HepG2 (cell line): ENCODE measurements at regions of chr9 and their contacts with region 1.

Region 1: DNA sequence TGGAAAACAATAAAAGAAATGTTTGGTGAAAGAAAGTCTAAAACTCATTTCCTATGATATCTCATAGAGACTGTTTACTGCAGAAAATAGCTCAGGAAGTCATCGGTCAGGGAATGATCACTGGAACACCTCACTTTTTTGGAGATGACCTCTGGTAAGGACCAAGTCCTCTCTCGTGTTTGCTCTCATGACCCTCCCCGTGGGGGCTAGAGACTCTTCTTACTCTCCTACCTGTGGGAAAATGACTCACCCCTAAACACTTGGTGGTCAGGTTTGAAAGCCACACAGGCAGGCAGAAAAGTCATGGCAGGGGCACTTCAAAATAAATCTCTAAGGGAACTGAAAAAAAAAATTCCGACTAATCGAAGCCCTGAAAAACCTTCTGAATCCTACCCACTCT is 48.2 kb downstream of the FAM240B start:
- DNase-seq: no peak
- ATAC-seq: no peak
- H3K4me3 ChIP-seq: no peak overlapping the region
- H3K27ac ChIP-seq: no peak overlapping the region
- H3K4me1 ChIP-seq: peaks cover 23% of the 10 kb centered on the region
- H3K27me3 ChIP-seq: peaks cover 2 to 45% of the 10 kb centered on the region in 2 experiments; a peak in 2 of 5 replicates
- CTCF ChIP-seq: no peak
- EP300 ChIP-seq: no peak
- POLR2A ChIP-seq: no peak
- RAD21 ChIP-seq: no peak

Region 2: GRCh38 chr9:38096238-38096805 is 575.4 kb before region 1 on chr9:
- CTCF ChIA-PET with region 1: no interaction called
- POLR2A ChIA-PET with region 1: no interaction called
- in situ Hi-C with region 1: no loop called
- intact Hi-C with region 1: no loop called
- DNase-seq: no peak
- ATAC-seq: no peak
- H3K4me3 ChIP-seq: no peak overlapping the region
- H3K27ac ChIP-seq: no peak overlapping the region
- H3K4me1 ChIP-seq: no peaks in the 10 kb centered on the region
- H3K27me3 ChIP-seq: peaks cover 1 to 11% of the 10 kb centered on the region in 2 experiments; a peak in 2 of 5 replicates
- CTCF ChIP-seq: no peak
- EP300 ChIP-seq: no peak
- POLR2A ChIP-seq: no peak
- RAD21 ChIP-seq: no peak

Region 3: GRCh38 chr9:38417003-38417945 is 254.5 kb before region 1 on chr9:
- CTCF ChIA-PET with region 1: no interaction called
- POLR2A ChIA-PET with region 1: no interaction called
- in situ Hi-C with region 1: no loop called
- intact Hi-C with region 1: loop called (anchors 5 kb)
- DNase-seq: peak; percentile 38
- ATAC-seq: peak; percentile 77
- H3K4me3 ChIP-seq: no peak overlapping the region
- H3K27ac ChIP-seq: no peak overlapping the region
- H3K4me1 ChIP-seq: peaks cover 11% of the 10 kb centered on the region; the same call in 1 of the 2 replicates
- H3K27me3 ChIP-seq: peaks cover 6 to 46% of the 10 kb centered on the region in 2 experiments
- CTCF ChIP-seq: peak; percentile 79
- EP300 ChIP-seq: no peak
- POLR2A ChIP-seq: no peak
- RAD21 ChIP-seq: no peak

Region 4: DNA sequence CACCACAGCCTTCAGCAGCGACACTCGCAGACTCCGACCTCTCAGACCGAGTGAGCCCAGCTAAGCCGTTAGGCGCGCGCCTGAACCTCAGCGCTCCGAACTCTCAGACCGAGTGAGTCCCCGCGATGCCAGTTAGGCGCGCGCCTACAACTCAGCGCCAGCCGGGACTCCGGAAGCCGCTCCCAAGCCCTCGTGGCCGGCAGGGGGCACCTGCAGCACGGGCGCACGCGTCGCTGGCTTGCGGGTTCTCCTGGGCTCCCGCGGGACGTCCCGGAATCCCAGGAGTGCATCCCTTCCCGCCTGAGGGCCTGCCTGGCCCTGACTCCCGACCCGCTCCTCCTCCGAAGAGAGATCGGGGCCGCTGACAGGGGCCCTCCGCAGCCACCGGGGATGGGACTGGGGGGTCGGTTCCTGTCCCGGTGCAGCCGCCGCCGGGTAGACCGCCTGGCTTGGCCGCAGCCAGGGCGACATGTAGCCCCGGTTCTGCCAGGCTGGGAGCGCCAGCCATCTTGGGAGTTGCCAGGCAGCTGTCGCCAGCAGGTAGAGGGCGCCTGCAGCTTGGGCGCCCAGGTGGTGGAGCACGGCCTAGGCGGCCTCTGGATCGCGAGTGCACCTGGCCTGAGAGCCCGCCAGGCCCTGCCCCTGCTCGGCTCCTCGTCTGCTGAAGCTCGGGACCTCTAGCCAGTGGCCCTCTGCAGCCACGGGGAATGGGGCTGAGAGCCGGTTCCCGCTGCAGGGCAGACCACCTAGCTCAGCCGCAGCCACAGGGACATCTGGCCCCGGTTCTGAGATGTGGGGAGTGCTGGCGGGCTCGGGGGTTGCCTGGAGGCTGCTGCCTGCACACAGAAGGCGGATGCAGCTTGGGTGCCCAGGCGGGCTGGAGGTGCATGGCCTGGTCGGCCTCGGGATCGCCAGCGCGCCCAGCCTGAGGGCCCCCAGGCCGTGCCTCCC is 51.0 kb before region 1 on chr9 and contains the start of gene ANKRD18A:
- CTCF ChIA-PET with region 1: interaction called, 7 read pairs
- POLR2A ChIA-PET with region 1: interaction called, 3 read pairs
- in situ Hi-C with region 1: loop called (anchors 5 kb)
- intact Hi-C with region 1: loop called (anchors 2 kb)
- DNase-seq: peak; percentile 89
- ATAC-seq: peak; percentile 91
- H3K4me3 ChIP-seq: peak within 1 kb of the TSS; percentile 68 to 79 (median 70)
- H3K27ac ChIP-seq: peak within 1 kb of the TSS; percentile 77
- H3K4me1 ChIP-seq: no peaks in the 10 kb centered on the region
- H3K27me3 ChIP-seq: no peaks in the 10 kb centered on the region
- CTCF ChIP-seq: peak; percentile 88
- EP300 ChIP-seq: no peak
- POLR2A ChIP-seq: peak; percentile 67 to 85
- RAD21 ChIP-seq: peak; percentile 91
- total RNA-seq, gene ANKRD18A: 4.3 and 5.9 TPM in 2 replicates

Region 5: DNA sequence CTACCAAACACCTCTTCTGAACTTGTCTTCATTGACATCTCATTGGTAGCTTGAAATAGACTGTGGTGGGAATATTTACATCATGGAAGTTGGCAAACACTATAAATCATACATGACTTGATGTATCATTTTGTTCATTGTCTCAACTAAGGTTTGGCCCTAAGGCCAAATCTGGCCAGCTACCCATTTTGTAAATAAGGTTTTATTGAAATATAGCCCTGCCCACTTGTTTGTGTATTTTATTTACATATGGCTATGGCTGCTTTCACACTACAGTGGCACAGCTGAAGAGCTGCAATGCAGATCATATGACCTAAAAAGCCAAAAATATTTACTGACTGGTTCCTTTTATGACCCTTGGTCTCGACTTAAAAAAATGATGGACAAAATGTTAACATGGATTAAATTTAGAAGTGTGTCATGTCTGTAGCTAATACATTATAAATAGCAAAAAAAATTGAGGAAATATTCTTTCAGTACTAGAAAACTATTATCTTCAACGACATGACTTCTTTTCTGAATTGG is 26.1 kb after region 1 on chr9:
- CTCF ChIA-PET with region 1: no interaction called
- POLR2A ChIA-PET with region 1: no interaction called
- in situ Hi-C with region 1: no loop called
- intact Hi-C with region 1: loop called (anchors 2 kb)
- DNase-seq: no peak
- ATAC-seq: no peak
- H3K4me3 ChIP-seq: no peak overlapping the region
- H3K27ac ChIP-seq: no peak overlapping the region
- H3K4me1 ChIP-seq: no peaks in the 10 kb centered on the region
- H3K27me3 ChIP-seq: peaks cover 1 to 21% of the 10 kb centered on the region in 2 experiments; a peak in 3 of 5 replicates
- CTCF ChIP-seq: no peak
- EP300 ChIP-seq: no peak
- POLR2A ChIP-seq: no peak
- RAD21 ChIP-seq: no peak